Sciatic nerve (tissue), 2 donors: ENCODE measurements at regions of chr3 and their contacts with region 1.

Region 1: GRCh38 chr3:119891944-119892721 is 110.2 kb downstream of the NR1I2 start:
- DNase-seq: no peak
- ATAC-seq: peak; percentile 87

Region 2: DNA sequence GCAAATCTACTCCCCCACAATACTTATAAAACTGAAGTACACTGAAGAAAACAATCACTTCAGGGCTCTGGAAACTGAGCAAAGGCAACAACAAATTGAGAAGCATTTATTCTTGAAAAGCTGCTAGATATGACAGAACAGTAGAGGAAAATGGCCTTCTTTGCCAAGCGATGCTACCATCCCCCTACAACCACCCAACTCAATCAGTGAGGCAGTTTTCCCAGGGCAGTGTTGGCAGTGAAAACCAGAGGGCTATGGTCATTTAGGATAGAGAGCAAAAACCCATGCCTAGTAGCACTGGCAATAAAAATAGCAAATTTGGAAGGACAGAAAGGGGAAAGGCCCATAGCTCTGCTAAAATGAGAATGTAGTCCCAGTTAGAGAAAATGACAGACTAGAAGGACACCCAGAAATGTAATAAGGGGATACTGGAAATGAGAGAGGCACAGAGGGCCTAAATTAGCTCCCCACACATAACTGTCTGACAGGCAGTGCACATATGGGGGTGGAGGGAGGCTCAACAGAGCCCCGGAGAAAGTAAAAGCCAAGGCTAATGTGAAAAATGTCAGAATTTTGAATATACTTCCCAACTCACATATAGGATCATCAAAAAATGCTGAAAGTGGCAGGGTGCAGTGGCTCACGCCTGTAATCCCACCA is 58.7 kb after region 1 on chr3:
- intact Hi-C with region 1: no loop called
- DNase-seq: no peak
- ATAC-seq: no peak

Region 3: DNA sequence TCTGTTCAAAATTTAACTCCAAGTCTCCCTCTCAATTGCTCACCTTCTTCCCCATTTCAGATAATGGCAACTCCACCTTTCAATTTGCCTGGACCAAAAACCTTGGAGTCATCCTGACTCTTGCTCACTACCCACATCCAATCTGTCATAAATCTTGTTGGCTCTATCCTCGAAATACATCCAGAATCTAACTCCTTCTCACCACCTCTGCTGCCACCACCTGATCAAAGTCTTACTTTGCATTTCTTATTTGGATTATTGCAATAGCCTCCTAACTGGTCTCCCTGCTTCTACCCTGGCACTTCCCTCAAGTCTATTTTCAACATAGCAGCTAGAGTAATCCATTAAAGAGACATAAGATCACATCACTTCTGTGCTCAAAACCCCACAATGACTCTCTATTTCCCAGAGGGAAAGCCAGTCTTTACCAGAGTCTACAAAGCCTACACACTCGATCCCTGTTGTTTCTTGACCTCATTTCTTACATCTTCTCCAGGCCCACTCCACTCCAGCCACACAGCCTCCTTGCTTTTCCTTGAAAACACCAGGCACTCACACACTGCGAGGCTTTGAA is 306.3 kb after region 1 on chr3:
- intact Hi-C with region 1: loop called (anchors 10 kb)
- DNase-seq: no peak
- ATAC-seq: no peak